ENCODE measurements at regions of chr20 and their contacts with region 1.

Region 1: GRCh38 chr20:44633872-44634600 is 17.5 kb downstream of the ADA start:
- DNase-seq: no peak
- ATAC-seq: peak in 1 of 8 donors; percentile 19
- H3K4me3 ChIP-seq: no peak overlapping the region
- H3K27ac ChIP-seq: peak overlapping the region in 6 of 10 donors; percentile 18 to 66 (median 34)
- H3K4me1 ChIP-seq: peaks cover 10 to 78% (median 50%) of the 10 kb centered on the region in 9 donors
- H3K27me3 ChIP-seq: no peaks in the 10 kb centered on the region
- CTCF ChIP-seq: no peak

Region 2: GRCh38 chr20:44038681-44039123 is 595.3 kb before region 1 on chr20:
- intact Hi-C with region 1: no loop called
- DNase-seq: no peak
- ATAC-seq: peak in 2 of 8 donors; percentile 42
- H3K4me3 ChIP-seq: no peak overlapping the region
- H3K27ac ChIP-seq: no peak overlapping the region
- H3K4me1 ChIP-seq: peaks cover 0 to 7% (median 0%) of the 10 kb centered on the region in 9 donors
- H3K27me3 ChIP-seq: peaks cover 0 to 49% (median 33%) of the 10 kb centered on the region in 7 donors
- CTCF ChIP-seq: no peak

Region 3: GRCh38 chr20:44618318-44618731 is 15.7 kb before region 1 on chr20:
- intact Hi-C with region 1: loop called in 1 of 10 experiments (anchors 2 kb)
- DNase-seq: peak in 1 of 2 donors; percentile 74
- ATAC-seq: peak in 1 of 8 donors; percentile 5
- H3K4me3 ChIP-seq: no peak overlapping the region
- H3K27ac ChIP-seq: peak overlapping the region in 6 of 10 donors; percentile 10 to 84 (median 46)
- H3K4me1 ChIP-seq: peaks cover 30 to 65% (median 52%) of the 10 kb centered on the region in 9 donors
- H3K27me3 ChIP-seq: no peaks in the 10 kb centered on the region
- CTCF ChIP-seq: no peak

Region 4: DNA sequence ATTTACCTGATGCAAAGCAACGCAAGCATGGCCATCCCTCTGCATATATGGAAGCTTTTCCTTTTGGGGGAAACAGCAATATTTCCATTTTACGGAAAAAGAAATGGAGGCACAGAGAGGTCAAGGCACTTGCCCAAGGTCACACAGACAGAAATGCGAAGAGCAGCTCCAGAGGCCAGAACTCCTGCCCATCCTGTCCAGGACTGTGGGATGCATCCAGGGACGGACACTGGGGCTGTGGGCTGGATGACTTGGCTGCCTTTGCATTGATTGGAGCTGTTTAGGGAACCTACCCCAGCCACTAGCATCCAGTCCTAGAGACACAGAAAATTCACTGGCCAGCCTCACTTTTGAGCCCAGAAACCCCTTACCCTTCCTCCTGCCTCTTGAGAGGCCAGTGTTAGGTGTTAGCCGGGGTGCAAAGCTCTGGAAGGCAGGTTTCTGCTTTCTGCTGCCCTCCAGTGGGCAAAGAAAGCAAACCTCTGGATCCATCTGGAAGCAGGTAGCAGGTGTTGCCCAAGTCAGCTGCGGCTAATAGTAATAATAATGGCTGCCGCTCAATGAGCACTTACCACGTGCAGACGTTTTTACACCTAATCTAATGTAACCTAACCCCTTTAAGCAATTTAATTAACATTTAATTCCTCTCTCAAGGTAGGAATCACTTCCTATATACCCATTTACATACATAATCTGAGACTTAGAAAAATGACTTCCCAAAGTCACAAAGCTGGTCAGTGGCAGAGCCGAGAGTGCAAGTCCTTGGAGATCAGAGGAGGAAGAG is 49.4 kb after region 1 on chr20:
- intact Hi-C with region 1: no loop called
- DNase-seq: no peak
- ATAC-seq: peak in 7 of 8 donors; percentile 43 to 75 (median 54)
- H3K4me3 ChIP-seq: no peak overlapping the region
- H3K27ac ChIP-seq: no peak overlapping the region
- H3K4me1 ChIP-seq: peaks cover 0 to 14% (median 6%) of the 10 kb centered on the region in 9 donors
- H3K27me3 ChIP-seq: peaks cover 0 to 4% (median 0%) of the 10 kb centered on the region in 7 donors
- CTCF ChIP-seq: peak in 8 of 9 donors; percentile 46 to 75 (median 56)

Region 5: GRCh38 chr20:44805979-44806620 is 172.1 kb after region 1 on chr20:
- intact Hi-C with region 1: no loop called
- DNase-seq: peak in 1 of 2 donors; percentile 8
- ATAC-seq: peak in 3 of 8 donors; percentile 20 to 33 (median 26)
- H3K4me3 ChIP-seq: no peak overlapping the region
- H3K27ac ChIP-seq: no peak overlapping the region
- H3K4me1 ChIP-seq: peaks cover 0 to 5% (median 0%) of the 10 kb centered on the region in 9 donors
- H3K27me3 ChIP-seq: peaks cover 8 to 69% (median 57%) of the 10 kb centered on the region in 7 donors
- CTCF ChIP-seq: no peak